PC-9 (cell line): ENCODE measurements at regions of chr19 and their contacts with region 1.

Region 1: GRCh38 chr19:47483800-47484690 is at the start of gene KPTN:
- DNase-seq: peak; percentile 75 to 88
- H3K4me3 ChIP-seq: peak within 1 kb of the TSS; percentile 84
- H3K27ac ChIP-seq: peak within 1 kb of the TSS; percentile 76
- H3K4me1 ChIP-seq: peaks cover 10% of the 10 kb centered on the region; the same call in 1 of the 2 replicates
- H3K27me3 ChIP-seq: no peaks in the 10 kb centered on the region
- CTCF ChIP-seq: peak; percentile 99
- total RNA-seq, gene KPTN: 20.8 and 24.2 TPM in 2 replicates

Region 2: GRCh38 chr19:47370045-47370611 is 113.9 kb before region 1 on chr19:
- CTCF ChIA-PET with region 1: no interaction called
- POLR2A ChIA-PET with region 1: no interaction called
- intact Hi-C with region 1: no loop called
- DNase-seq: peak in 1 of 2 experiments; percentile 54
- H3K4me3 ChIP-seq: no peak overlapping the region
- H3K27ac ChIP-seq: no peak overlapping the region
- H3K4me1 ChIP-seq: no peaks in the 10 kb centered on the region
- H3K27me3 ChIP-seq: no peaks in the 10 kb centered on the region
- CTCF ChIP-seq: no peak

Region 3: DNA sequence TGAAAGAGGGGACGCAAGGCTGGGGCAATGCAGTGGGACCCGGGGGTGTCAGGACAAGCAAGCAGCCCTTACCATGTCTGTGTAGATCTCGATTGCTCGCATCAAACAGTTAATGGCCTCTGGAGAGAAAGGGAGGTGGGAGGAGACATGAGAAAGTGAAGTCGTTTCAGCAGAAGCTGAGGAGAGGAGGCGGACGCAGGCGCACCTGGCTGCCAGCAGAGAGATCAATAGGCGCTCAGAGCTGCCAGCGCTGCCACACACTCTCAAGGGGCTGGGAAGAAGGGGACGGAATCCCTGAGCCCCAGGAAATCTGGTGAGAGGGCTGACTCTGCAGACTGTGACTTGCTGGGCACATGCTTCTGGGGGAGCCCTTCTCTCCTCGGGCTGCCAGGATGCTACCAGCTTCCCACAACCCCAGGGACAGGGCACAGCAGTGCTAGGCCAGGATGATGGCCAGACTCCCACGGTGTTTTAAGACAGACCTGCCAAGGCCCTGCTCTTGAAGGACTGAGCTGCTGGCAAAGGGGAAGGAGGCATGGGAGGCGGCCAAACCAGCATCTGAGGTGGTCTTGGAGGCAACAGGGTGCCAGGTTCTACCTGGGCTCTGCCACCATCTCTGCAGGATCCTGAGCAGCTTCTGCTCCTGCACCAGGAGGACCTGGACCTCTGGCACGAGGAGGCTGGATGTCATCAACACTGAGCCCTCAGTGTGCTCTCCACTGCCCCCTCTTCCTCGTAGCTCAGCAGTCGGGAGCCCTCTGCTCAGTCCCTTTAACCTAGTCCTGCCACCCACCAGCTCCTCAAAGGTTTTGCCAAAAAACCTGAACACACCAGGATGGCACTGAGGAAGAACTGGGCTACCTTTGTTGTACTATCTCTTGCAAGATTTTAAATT is 11.7 kb after region 1 on chr19:
- CTCF ChIA-PET with region 1: no interaction called
- POLR2A ChIA-PET with region 1: interaction called, 14 read pairs
- intact Hi-C with region 1: no loop called
- DNase-seq: no peak
- H3K4me3 ChIP-seq: no peak overlapping the region
- H3K27ac ChIP-seq: no peak overlapping the region
- H3K4me1 ChIP-seq: no peaks in the 10 kb centered on the region
- H3K27me3 ChIP-seq: no peaks in the 10 kb centered on the region
- CTCF ChIP-seq: no peak

Region 4: GRCh38 chr19:47631681-47632378 is 147.8 kb after region 1 on chr19:
- CTCF ChIA-PET with region 1: no interaction called
- POLR2A ChIA-PET with region 1: no interaction called
- intact Hi-C with region 1: no loop called
- DNase-seq: no peak
- H3K4me3 ChIP-seq: no peak overlapping the region
- H3K27ac ChIP-seq: no peak overlapping the region
- H3K4me1 ChIP-seq: peaks cover 11% of the 10 kb centered on the region
- H3K27me3 ChIP-seq: no peaks in the 10 kb centered on the region
- CTCF ChIP-seq: no peak